PC-9 (cell line): ENCODE measurements at regions of chr3 and their contacts with region 1.

Region 1: DNA sequence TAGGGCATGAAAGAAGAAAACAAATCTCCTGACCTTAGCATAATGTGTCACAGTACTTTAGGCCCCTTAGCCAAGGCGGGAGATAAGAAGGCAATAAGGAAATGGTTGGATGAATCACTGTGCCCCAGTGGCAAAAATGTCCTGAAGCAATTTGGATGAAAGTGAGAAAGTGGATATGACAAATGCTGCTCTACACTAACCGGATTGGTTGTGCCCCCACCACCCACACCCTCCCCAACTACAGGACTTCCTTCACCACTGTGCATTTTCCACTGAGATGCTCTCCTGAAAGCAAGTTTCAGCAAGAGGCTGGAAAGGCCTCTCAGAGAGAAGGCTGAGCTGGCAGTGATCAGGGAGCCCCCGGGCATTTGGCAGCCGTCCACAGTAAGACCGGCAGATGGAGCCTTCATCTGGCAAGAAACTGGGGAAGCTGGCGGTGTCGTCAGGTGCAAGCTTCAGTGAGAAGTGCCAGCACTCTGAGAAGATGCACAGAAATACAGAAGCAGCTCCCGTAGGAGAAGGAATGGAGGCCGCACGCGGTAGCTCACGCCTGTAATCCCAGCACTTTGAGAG is 63.8 kb downstream of the ATP1B3 start:
- DNase-seq: peak; percentile 95 to 98
- H3K4me3 ChIP-seq: peak overlapping the region; percentile 51; the same call in 1 of the 2 replicates
- H3K27ac ChIP-seq: peak overlapping the region; percentile 88
- H3K4me1 ChIP-seq: peaks cover 42% of the 10 kb centered on the region
- H3K27me3 ChIP-seq: no peaks in the 10 kb centered on the region
- CTCF ChIP-seq: no peak

Region 2: DNA sequence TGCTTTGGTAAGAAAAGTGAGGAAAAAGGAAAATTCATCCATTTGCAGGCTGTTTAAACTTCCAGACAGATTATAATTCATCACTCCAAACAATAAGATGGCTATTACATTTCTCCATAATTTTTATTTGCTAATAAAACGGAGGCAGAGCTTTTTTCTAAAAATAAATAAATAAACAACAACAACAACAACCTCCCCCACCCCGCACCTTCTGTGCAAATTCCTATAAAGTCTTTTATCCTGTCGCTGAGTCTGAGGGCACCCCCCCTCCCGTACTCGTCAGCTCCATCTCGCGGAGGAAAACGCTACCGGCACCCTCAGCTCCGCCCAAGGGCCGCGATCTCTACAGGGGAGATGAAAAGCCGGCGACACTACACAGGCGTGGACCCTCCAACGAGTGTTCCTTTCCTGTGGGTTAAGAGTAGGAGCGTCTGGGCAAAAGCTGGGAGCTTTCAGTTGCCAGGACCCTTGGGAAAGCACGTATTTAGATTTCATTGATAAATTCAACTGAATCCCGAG is 64.9 kb before region 1 on chr3:
- CTCF ChIA-PET with region 1: no interaction called
- POLR2A ChIA-PET with region 1: no interaction called
- intact Hi-C with region 1: loop called (anchors 1 kb)
- DNase-seq: peak; percentile 61 to 85
- H3K4me3 ChIP-seq: peak overlapping the region; percentile 92
- H3K27ac ChIP-seq: 0 out of 2 replicates have a peak overlapping the region, but pooled peaks have one; percentile 0
- H3K4me1 ChIP-seq: peaks cover 20% of the 10 kb centered on the region
- H3K27me3 ChIP-seq: no peaks in the 10 kb centered on the region
- CTCF ChIP-seq: peak; percentile 78

Region 3: GRCh38 chr3:141963301-141963700 is 23.0 kb after region 1 on chr3:
- CTCF ChIA-PET with region 1: no interaction called
- POLR2A ChIA-PET with region 1: no interaction called
- intact Hi-C with region 1: no loop called
- DNase-seq: no peak
- H3K4me3 ChIP-seq: no peak overlapping the region
- H3K27ac ChIP-seq: no peak overlapping the region
- H3K4me1 ChIP-seq: peaks cover 34% of the 10 kb centered on the region
- H3K27me3 ChIP-seq: no peaks in the 10 kb centered on the region
- CTCF ChIP-seq: no peak

Region 4: DNA sequence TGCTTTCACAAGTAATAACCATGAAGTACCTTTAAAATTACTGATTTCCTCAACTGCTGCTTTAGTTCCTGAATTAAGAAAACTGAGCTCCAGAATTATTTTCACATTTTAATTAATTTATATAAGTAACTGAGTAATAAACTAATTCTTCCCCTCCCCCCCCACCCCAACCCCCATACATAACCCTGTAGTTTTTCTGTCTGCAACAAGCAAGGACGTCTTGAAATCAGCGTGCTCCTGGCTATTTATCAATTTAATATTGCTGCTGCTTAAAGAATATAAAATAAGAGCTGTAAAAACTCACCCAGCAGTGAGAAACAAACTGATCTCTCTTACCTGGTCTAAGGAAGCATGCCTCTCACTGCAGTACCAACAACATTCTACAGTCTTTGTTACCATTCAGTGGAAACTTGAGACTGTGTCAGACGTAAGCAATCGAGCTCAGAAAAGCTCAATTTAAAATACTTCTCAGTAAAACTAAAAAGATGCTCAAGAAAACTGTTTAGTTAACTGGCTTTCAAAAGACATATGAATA is 88.0 kb after region 1 on chr3:
- CTCF ChIA-PET with region 1: no interaction called
- POLR2A ChIA-PET with region 1: no interaction called
- intact Hi-C with region 1: loop called (anchors 2 kb)
- DNase-seq: peak in 1 of 2 experiments; percentile 35
- H3K4me3 ChIP-seq: peak overlapping the region; percentile 39; the same call in 1 of the 2 replicates
- H3K27ac ChIP-seq: no peak overlapping the region
- H3K4me1 ChIP-seq: no peaks in the 10 kb centered on the region
- H3K27me3 ChIP-seq: no peaks in the 10 kb centered on the region
- CTCF ChIP-seq: no peak

Region 5: DNA sequence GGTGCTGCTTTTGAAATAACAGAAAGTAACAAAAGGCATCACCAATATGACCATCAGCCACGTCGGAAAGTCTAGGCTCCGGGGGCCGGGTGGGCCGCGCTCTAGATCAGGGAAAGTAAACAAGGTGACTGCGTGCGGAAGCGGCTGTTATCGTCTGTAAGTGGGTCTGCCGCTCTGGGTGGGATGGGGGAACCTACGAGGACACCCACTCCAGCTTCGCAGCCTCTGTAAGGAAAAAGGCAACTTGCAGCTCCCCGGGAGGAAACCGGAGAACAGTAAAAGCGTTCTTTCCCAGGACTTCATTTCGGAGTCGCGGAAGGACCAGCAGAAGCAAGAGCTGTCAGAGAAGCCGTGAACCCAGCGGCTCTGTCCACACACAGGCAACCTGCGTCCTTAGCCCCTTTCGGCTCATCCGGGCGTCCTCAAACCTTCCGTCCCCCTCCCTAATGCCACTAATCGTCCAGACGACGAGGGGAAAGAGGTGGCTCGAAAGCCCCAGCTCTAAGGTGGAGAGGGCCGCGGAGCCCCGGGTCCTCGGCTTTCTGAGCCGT is 507.1 kb after region 1 on chr3:
- CTCF ChIA-PET with region 1: no interaction called
- POLR2A ChIA-PET with region 1: no interaction called
- intact Hi-C with region 1: no loop called
- DNase-seq: no peak
- H3K4me3 ChIP-seq: peak overlapping the region; percentile 80
- H3K27ac ChIP-seq: peak overlapping the region; percentile 69
- H3K4me1 ChIP-seq: peaks cover 20% of the 10 kb centered on the region
- H3K27me3 ChIP-seq: no peaks in the 10 kb centered on the region
- CTCF ChIP-seq: no peak